ENCODE measurements at regions of chr20 and their contacts with region 1.

Region 1: DNA sequence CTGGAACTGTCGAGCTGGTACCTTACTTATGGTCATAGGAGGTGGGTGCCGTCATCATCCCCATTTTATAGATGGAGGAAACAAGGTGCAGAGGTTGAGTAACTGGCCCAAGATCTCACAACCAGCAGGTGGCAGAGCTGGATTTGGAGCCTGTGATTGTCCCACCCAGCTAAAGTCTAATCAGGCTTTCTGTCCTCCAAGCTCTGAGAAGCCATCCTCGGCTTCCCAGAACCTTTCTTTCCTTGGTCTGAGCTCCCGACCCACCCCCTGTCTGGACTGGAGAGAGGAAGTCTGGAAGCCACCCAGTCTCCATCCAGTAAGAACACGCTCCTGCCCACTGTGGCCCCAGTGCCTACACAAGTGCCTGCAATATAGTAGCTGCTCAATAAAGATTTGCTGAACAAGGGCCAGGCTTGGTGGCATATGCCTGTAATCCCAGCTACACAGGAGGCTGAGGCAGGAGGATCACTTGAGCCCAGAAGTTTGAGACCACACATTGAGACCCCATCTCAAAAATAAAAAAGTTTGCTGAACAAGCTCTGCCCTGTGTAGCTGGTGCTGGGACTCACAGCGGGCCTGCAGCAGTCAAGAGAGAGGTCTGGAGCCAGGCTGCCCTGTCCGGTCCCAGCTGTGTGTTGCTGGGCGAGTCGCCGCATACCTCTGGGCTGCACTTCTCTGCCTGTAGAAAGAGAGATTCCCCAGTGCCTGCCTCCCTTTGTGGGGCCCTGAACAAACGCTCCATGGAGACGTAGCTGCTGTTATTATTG is 32.5 kb upstream of the DLGAP4 start:
- DNase-seq: peak; percentile 30
- H3K4me3 ChIP-seq: no peak overlapping the region
- H3K27ac ChIP-seq: no peak overlapping the region
- H3K4me1 ChIP-seq: no peaks in the 10 kb centered on the region
- H3K27me3 ChIP-seq: no peaks in the 10 kb centered on the region
- CTCF ChIP-seq: peak; percentile 45

Region 2: DNA sequence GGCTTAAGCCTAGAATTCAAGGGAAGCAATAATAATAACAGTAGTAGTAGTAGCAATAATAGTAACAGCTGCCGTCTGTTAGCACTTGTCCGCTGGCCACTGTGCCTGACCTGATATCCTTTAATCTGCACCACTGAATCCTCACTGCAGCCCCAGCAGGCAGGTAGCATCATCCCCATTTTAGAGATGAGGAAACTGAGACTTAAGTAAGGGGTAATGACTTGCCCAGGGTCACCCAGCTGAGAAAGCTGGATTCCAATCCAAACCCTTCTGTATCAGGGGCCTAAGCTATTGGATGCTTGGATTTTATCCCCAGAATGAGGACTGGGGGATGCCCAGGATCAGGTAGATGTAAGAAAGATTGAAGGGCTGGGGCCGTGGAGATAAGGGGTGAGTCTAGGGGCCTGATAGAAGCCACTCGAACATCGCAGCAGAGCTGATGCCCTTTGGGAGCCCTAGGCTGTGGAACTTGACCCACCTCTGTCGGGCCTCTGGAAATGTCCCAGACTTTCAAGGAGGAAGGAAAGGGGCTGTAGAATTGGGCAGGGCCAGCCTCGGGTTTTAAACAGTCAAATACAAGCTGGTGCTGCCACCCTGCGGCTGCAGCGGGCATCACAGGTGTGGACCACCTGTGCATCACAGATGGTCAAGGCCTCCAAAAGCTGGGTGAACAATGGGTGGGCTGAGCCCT is 165.6 kb after region 1 on chr20:
- CTCF ChIA-PET with region 1: interaction called, 7 read pairs
- POLR2A ChIA-PET with region 1: no interaction called
- intact Hi-C with region 1: loop called (anchors 5 kb)
- DNase-seq: peak; percentile 71
- H3K4me3 ChIP-seq: no peak overlapping the region
- H3K27ac ChIP-seq: no peak overlapping the region
- H3K4me1 ChIP-seq: no peaks in the 10 kb centered on the region
- H3K27me3 ChIP-seq: no peaks in the 10 kb centered on the region
- CTCF ChIP-seq: peak; percentile 97

Measured in A673 (cell line).